Cardiac septum (tissue), 1 donor: ENCODE measurements at regions of chr18 and their contacts with region 1.

Region 1: GRCh38 chr18:35143622-35144596 is 96.9 kb upstream of the ZNF397 start:
- DNase-seq: no peak

Region 2: DNA sequence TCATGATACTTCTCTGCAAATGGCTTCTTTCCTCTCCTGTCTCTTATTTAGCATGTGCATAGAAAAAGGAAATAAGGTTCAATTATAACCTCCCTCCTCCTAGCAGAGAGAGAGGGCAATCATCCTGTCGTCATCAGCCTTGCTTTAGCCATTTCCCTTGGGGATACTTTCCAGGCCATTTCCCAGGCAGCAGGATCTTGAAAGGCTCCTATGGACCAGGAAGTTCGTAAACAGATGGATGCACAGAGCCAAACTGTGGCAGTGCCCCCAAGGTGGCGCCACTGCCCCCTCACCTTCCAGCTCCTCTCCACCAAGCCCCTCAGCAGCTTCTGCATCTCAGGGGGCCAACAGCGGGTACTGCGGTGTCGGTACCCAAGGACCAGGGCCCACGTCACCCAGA is 276.4 kb before region 1 on chr18:
- intact Hi-C with region 1: loop called (anchors 5 kb)
- DNase-seq: no peak

Region 3: DNA sequence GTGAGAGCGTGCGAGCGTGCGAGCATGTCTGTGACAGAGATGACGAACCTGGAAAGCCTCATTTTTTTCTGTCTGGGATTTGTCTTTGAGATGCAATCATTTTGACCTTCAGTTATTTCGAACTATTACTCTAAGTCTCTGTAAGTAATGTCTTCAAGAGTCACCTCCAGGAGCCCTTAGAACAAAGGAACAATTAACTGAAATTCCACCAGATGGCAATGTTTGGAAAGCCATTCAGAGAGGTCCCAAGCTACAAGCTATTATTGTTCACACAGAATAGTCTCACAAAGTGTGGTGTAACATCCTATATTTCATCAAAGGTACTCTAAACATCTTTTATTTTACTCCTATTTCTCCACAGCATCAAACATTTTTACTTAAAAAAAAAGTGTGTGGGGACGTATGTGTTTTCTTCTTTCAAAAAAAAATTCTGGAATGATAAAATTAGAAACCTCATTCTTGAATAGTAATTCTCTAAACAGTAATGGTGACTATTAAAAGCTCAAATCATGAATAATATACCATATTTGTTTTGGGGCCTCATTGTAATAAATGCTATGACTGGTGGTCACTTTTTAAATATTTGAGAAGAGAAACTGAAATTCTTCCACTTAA is 137.8 kb before region 1 on chr18:
- intact Hi-C with region 1: loop called (anchors 1 kb)
- DNase-seq: no peak

Region 4: GRCh38 chr18:35029770-35030169 is 114.1 kb before region 1 on chr18:
- intact Hi-C with region 1: loop called (anchors 1 kb)
- DNase-seq: no peak

Region 5: DNA sequence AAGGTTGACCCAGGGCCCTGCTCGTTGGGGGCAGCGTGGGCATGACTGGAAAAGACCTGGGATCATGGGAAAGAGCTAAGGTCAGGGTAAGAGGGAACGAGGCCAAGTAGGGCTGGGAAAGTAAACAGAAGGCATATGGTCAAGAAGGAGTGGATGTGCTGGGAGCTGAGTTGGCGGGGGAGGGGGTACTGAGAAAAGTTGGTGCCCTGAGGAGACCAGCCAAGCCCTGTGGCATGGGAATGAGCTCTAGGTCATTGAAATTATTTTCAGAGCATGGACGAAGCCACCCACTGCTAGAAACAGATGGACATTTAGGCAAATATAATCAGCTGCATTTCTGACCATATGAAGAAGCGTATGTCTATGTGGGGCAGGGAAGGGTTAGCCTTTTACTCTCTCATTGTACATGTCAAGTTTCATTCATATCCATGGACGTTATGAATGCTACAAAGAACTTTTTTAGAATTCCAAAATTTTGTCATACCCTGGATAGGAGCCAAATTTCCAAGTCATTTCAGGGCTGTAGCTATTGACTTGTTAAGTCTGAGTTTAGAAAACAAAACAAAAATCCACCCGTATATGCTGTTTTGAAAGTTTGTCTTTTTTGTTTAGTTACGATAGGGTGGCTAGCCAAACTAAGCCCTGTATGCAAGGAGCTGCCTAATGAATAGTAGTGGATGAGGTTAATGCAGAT is 83.6 kb before region 1 on chr18:
- intact Hi-C with region 1: no loop called
- DNase-seq: no peak